Activated CD4-positive, alpha-beta memory T cell treated with anti-CD3 and anti-CD28 coated beads for 36 hours (primary cell): ENCODE measurements at regions of chr10 and their contacts with region 1.

Region 1: GRCh38 chr10:95601116-95601719 is 40.0 kb upstream of the SORBS1 start:
- DNase-seq: peak; percentile 66
- H3K4me3 Mint-ChIP-seq: no peak overlapping the region
- H3K27ac Mint-ChIP-seq: no peak overlapping the region
- H3K4me1 Mint-ChIP-seq: no peaks in the 10 kb centered on the region
- H3K27me3 Mint-ChIP-seq: peaks cover 4% of the 10 kb centered on the region

Region 2: GRCh38 chr10:95133016-95133752 is 468.0 kb before region 1 on chr10:
- CTCF ChIA-PET with region 1: no interaction called
- POLR2A ChIA-PET with region 1: no interaction called
- intact Hi-C with region 1: loop called (anchors 1 kb)
- DNase-seq: peak; percentile 81
- H3K4me3 Mint-ChIP-seq: no peak overlapping the region
- H3K27ac Mint-ChIP-seq: no peak overlapping the region
- H3K4me1 Mint-ChIP-seq: no peaks in the 10 kb centered on the region
- H3K27me3 Mint-ChIP-seq: peaks cover 1% of the 10 kb centered on the region

Region 3: GRCh38 chr10:95374597-95375209 is 226.5 kb before region 1 on chr10:
- CTCF ChIA-PET with region 1: interaction called, 89 read pairs
- POLR2A ChIA-PET with region 1: no interaction called
- intact Hi-C with region 1: loop called (anchors 1 kb)
- DNase-seq: peak; percentile 81
- H3K4me3 Mint-ChIP-seq: no peak overlapping the region
- H3K27ac Mint-ChIP-seq: no peak overlapping the region
- H3K4me1 Mint-ChIP-seq: peaks cover 9% of the 10 kb centered on the region
- H3K27me3 Mint-ChIP-seq: peaks cover 14% of the 10 kb centered on the region

Region 4: GRCh38 chr10:95445837-95446486 is 155.3 kb before region 1 on chr10:
- CTCF ChIA-PET with region 1: interaction called, 11 read pairs
- POLR2A ChIA-PET with region 1: no interaction called
- intact Hi-C with region 1: loop called (anchors 1 kb)
- DNase-seq: peak; percentile 34
- H3K4me3 Mint-ChIP-seq: no peak overlapping the region
- H3K27ac Mint-ChIP-seq: no peak overlapping the region
- H3K4me1 Mint-ChIP-seq: peaks cover 6% of the 10 kb centered on the region
- H3K27me3 Mint-ChIP-seq: peaks cover 5% of the 10 kb centered on the region

Region 5: GRCh38 chr10:95987685-95988426 is 386.6 kb after region 1 on chr10:
- CTCF ChIA-PET with region 1: no interaction called
- POLR2A ChIA-PET with region 1: no interaction called
- intact Hi-C with region 1: no loop called
- DNase-seq: no peak
- H3K4me3 Mint-ChIP-seq: no peak overlapping the region
- H3K27ac Mint-ChIP-seq: no peak overlapping the region
- H3K4me1 Mint-ChIP-seq: no peaks in the 10 kb centered on the region
- H3K27me3 Mint-ChIP-seq: peaks cover 2% of the 10 kb centered on the region